RWPE1 (cell line): ENCODE measurements at regions of chr20 and their contacts with region 1.

Region 1: GRCh38 chr20:44080646-44081267 is 106.2 kb downstream of the JPH2 start:
- DNase-seq: peak; percentile 94
- H3K27ac ChIP-seq: no peak overlapping the region
- CTCF ChIP-seq: peak; percentile 100

Region 2: GRCh38 chr20:43840382-43841070 is 240.2 kb before region 1 on chr20:
- CTCF ChIA-PET with region 1: interaction called, 22 read pairs
- POLR2A ChIA-PET with region 1: no interaction called
- DNase-seq: peak; percentile 94
- H3K27ac ChIP-seq: no peak overlapping the region
- CTCF ChIP-seq: no peak; the same call in 1 of the 2 replicates